Gastrocnemius medialis (tissue), 4 donors: ENCODE measurements at regions of chr6 and their contacts with region 1.

Region 1: DNA sequence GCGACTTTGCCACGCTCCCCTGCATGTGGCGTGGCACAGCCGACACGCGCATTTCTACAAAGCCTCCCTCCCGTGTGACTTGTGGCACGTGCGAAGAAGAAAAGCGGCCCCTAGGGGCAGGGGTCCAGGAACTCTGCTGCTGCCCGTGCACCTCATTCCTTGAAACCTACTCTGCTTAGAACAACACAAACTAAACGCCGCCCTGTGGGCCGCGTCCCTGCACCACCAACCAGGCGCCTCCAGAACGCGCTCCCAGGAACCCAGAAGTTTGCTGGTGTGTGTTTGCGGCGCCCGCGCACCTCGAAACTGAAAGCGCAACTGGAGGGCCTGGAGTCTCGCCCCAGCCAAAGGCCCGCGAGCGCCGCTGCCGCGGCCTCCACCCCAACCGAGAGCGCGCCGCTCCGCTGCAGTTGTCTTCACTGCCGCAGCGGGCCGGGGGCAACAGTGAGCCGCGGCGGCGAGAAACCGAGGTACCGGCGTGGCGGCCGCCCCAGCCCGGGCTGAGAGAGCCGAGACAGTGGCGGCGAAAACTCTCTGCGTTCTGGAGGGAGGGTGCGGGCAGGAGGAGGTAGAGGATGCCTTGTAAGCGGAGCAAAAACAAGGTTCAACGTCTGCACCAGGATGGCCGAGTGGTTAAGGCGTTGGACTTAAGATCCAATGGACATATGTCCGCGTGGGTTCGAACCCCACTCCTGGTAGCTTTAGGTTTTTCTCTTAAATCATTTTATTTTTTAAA is 65.8 kb downstream of the STX11 start:
- DNase-seq: peak; percentile 88 to 93
- ATAC-seq: peak; percentile 92 to 93
- H3K4me3 ChIP-seq: peak overlapping the region; percentile 54 to 82 (median 77)
- H3K27ac ChIP-seq: peak overlapping the region; percentile 86 to 92 (median 88)
- H3K4me1 ChIP-seq: peaks cover 10 to 15% of the 10 kb centered on the region in 2 donors
- H3K27me3 ChIP-seq: no peaks in the 10 kb centered on the region
- CTCF ChIP-seq: peak; percentile 71 to 96 (median 85)
- POLR2A ChIP-seq: peak; percentile 18 to 34

Region 2: DNA sequence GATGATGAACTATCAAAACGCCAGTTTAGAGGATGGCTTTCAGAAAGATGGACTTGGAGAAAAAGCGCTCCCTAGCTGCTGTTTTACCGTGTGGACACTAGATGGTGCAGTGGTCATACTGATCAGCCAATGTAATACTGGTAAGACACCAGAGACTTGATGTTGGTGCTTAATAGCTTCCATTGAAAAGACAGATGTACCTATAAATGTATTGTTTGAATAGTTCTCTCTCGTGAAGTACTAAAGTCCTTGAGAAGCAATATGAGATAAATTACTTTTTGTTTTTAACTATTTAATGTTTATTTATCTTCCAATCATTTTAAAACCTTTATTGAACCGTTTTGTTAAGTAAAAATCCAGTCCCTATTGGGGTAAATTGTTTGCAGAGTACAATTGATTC is 640.7 kb before region 1 on chr6:
- in situ Hi-C with region 1: no loop called
- intact Hi-C with region 1: loop called (anchors 10 kb)
- DNase-seq: peak; percentile 18 to 33
- ATAC-seq: peak; percentile 86
- H3K4me3 ChIP-seq: no peak overlapping the region
- H3K27ac ChIP-seq: no peak overlapping the region
- H3K4me1 ChIP-seq: peaks cover 0 to 4% of the 10 kb centered on the region in 2 donors
- H3K27me3 ChIP-seq: no peaks in the 10 kb centered on the region
- CTCF ChIP-seq: peak; percentile 63 to 87 (median 84)
- POLR2A ChIP-seq: no peak

Region 3: DNA sequence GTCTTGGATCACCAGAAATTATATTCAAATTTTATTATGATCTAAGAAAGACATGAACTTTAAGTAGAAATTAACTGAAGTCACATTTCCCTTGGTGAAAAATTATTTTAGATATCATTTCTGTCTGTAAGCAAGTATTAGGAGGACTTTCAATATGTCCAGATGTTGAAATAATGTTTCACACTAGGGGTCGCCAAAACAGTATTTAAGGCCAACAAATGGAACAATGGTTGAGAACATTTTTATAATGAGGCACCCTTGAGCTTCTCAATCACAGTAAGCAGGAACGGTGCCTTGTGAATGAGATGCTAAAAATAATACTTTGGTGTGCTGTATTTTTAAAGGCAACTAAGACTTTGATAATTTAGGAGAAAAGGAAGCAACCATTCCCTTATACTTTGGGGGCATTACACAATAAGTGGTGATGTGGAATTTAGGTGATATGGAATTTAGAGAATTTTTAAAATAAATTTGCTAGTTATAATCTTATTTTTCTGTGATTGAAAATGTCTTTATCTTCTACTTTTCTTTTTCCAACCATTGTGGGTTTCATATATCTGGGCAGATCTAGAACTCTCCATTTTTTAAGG is 111.1 kb before region 1 on chr6:
- in situ Hi-C with region 1: loop called in 3 of 4 experiments (anchors 5 to 10 kb)
- intact Hi-C with region 1: loop called (anchors 2 kb)
- DNase-seq: no peak
- ATAC-seq: peak in 1 of 2 donors; percentile 69
- H3K4me3 ChIP-seq: no peak overlapping the region
- H3K27ac ChIP-seq: no peak overlapping the region
- H3K4me1 ChIP-seq: no peaks in the 10 kb centered on the region
- H3K27me3 ChIP-seq: no peaks in the 10 kb centered on the region
- CTCF ChIP-seq: peak; percentile 37 to 59 (median 53)
- POLR2A ChIP-seq: no peak

Region 4: DNA sequence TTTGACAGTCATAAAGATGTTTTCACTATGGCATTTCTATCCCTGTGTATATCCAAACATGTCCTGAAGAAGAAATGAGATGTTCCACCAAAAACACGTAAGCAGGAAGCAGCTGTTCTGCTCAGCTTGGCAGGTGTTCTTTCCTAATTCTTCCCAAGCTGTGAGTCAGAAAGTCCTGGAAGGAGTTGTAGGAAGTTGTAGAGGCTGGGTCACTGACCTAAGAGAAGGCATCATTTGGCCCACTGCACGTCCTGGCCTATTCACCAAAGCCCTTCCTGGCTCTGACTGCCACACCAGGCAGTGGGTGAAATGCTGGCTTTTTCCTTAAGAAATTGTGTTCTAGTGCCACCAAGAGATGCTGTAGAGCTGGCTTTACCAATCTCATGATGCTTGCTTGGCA is 25.5 kb before region 1 on chr6:
- in situ Hi-C with region 1: no loop called
- intact Hi-C with region 1: loop called (anchors 1 kb)
- DNase-seq: peak; percentile 14 to 54
- ATAC-seq: peak; percentile 84 to 91
- H3K4me3 ChIP-seq: no peak overlapping the region
- H3K27ac ChIP-seq: peak overlapping the region in 3 of 4 donors; percentile 19 to 54 (median 35)
- H3K4me1 ChIP-seq: no peaks in the 10 kb centered on the region
- H3K27me3 ChIP-seq: no peaks in the 10 kb centered on the region
- CTCF ChIP-seq: no peak
- POLR2A ChIP-seq: no peak

Region 5: GRCh38 chr6:144248476-144249301 is 32.6 kb after region 1 on chr6:
- in situ Hi-C with region 1: no loop called
- intact Hi-C with region 1: no loop called
- DNase-seq: no peak
- ATAC-seq: peak in 1 of 2 donors; percentile 26
- H3K4me3 ChIP-seq: no peak overlapping the region
- H3K27ac ChIP-seq: peak overlapping the region in 1 of 4 donors; percentile 16
- H3K4me1 ChIP-seq: no peaks in the 10 kb centered on the region
- H3K27me3 ChIP-seq: no peaks in the 10 kb centered on the region
- CTCF ChIP-seq: no peak
- POLR2A ChIP-seq: no peak

Region 6: DNA sequence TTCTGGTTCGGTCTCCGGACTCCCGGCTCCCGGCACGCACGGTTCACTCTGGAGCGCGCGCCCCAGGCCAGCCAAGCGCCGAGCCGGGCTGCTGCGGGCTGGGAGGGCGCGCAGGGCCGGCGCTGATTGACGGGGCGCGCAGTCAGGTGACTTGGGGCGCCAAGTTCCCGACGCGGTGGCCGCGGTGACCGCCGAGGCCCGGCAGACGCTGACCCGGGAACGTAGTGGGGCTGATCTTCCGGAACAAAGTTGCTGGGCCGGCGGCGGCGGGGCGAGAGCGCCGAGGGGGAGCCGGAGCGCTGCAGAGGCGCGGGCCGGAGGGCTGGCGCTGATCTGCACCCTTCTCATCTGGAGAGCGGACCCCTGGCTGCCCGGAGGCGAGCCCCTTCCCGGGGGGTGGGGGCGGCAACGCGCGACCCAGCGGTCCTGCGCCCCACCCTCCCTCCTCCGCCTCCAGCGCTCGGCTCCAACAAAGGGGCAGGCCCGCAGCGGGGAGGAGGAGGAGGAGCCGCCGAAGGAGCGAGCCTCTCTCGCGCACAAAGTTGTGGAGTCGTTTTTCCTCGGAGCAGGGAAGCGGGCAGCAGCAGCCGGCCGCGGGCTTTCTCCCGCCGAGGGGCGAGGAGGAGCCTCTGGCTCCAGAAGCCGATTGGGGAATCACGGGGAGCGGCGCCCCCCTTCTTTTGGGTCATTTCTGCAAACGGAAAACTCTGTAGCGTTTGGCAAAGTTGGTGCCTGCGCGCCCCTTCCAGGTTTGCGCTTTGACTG is 68.9 kb after region 1 on chr6 and contains the start of gene UTRN:
- in situ Hi-C with region 1: loop called in 2 of 4 experiments (anchors 5 to 10 kb)
- intact Hi-C with region 1: loop called (anchors 1 kb)
- DNase-seq: peak; percentile 56 to 67
- ATAC-seq: peak; percentile 75 to 76
- H3K4me3 ChIP-seq: peak within 1 kb of the TSS; percentile 72 to 99 (median 82)
- H3K27ac ChIP-seq: peak within 1 kb of the TSS; percentile 90 to 96 (median 92)
- H3K4me1 ChIP-seq: peaks cover 15 to 21% of the 10 kb centered on the region in 2 donors
- H3K27me3 ChIP-seq: no peaks in the 10 kb centered on the region
- CTCF ChIP-seq: peak in 1 of 5 experiments; percentile 18
- POLR2A ChIP-seq: peak; percentile 59 to 75
- total RNA-seq, gene UTRN: 24.1 to 66.3 (median 40.1) TPM

Region 7: GRCh38 chr6:144482142-144482541 is 266.0 kb after region 1 on chr6:
- in situ Hi-C with region 1: loop called (anchors 5 to 25 kb)
- intact Hi-C with region 1: loop called (anchors 2 kb)
- DNase-seq: peak; percentile 43 to 68
- ATAC-seq: peak; percentile 37 to 44
- H3K4me3 ChIP-seq: no peak overlapping the region
- H3K27ac ChIP-seq: no peak overlapping the region
- H3K4me1 ChIP-seq: peaks cover 25 to 35% of the 10 kb centered on the region in 2 donors
- H3K27me3 ChIP-seq: no peaks in the 10 kb centered on the region
- CTCF ChIP-seq: peak; percentile 34 to 72 (median 45)
- POLR2A ChIP-seq: no peak